ENCODE measurements at regions of chr20 and their contacts with region 1.

Region 1: GRCh38 chr20:58650776-58651558 is at the start of gene STX16:
- DNase-seq: peak; percentile 84
- H3K4me3 Mint-ChIP-seq: peak within 1 kb of the TSS; percentile 94
- H3K27ac Mint-ChIP-seq: peak within 1 kb of the TSS; percentile 97
- H3K4me1 Mint-ChIP-seq: peaks cover 25% of the 10 kb centered on the region
- H3K27me3 Mint-ChIP-seq: peaks cover 3% of the 10 kb centered on the region
- total RNA-seq, gene STX16: 99.9 and 102 TPM in 2 replicates

Region 2: DNA sequence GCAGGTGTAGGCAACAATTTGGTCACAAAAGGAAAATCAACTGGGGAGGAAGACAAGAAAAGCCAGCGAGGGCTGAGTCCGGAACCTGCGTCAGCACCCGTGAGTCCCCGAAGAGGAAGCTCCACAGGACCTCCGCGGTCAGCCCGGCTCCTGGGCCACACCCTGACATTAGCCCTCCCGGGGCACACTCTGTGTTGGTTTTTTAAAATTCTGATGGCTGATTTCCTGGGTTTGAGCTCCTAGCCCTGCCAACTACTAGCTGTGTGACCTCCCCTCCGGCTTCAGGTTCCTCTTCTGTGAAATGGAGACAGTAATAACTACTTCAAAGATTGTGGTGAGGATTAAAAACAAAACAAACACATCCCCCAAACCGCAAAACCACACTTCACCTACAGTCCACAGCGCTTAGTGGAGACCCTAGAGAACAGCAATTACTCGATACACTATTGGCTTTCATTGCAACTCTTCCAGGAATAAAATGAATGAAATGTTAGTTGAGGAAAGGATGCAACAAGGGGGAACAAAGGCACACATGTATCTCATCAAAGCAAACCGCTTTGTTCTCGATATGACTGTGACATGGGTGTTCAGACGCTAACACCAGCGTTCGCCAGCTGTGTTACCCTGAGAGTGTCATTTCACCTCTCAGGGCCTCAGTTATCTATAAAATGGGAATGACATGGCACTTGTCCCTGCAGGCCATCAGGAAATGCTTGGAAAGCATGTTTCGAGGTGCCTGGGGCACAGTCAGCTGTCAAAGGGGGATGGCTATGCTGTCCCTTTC is 1031.7 kb before region 1 on chr20:
- intact Hi-C with region 1: loop called (anchors 2 kb)
- DNase-seq: peak; percentile 71
- H3K4me3 Mint-ChIP-seq: peak overlapping the region; percentile 72
- H3K27ac Mint-ChIP-seq: peak overlapping the region; percentile 86
- H3K4me1 Mint-ChIP-seq: peaks cover 51% of the 10 kb centered on the region
- H3K27me3 Mint-ChIP-seq: peaks cover 17% of the 10 kb centered on the region

Region 3: DNA sequence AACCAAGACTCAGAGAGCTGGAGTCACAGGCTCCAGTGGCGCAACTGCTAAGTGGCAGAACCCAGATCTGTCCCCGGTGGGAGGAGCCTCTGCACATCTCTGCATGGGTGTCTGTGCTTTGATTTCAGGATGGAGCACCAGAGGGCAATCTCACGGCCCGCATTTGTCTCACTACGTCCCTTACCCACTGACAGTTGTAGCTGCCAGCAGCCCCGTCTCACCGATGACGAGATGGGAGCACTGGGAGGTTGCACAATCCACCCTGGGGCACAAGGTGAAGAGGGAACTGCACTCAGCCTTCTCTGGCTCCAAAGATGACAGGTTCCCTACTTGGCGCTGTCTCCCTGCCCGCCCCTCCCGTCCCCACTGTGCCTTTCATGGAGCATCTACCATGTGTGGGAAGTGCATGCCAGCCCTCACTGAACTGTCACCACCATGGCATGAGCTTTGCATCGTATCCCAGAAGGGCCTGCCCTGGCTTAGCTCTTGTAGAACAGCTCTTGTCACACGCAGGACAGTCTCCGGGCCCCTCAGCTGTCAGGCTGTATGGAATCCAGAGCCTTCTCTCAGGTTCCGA is 841.3 kb before region 1 on chr20:
- intact Hi-C with region 1: no loop called
- DNase-seq: no peak
- H3K4me3 Mint-ChIP-seq: no peak overlapping the region
- H3K27ac Mint-ChIP-seq: no peak overlapping the region
- H3K4me1 Mint-ChIP-seq: no peaks in the 10 kb centered on the region
- H3K27me3 Mint-ChIP-seq: peaks cover 2% of the 10 kb centered on the region

Region 4: DNA sequence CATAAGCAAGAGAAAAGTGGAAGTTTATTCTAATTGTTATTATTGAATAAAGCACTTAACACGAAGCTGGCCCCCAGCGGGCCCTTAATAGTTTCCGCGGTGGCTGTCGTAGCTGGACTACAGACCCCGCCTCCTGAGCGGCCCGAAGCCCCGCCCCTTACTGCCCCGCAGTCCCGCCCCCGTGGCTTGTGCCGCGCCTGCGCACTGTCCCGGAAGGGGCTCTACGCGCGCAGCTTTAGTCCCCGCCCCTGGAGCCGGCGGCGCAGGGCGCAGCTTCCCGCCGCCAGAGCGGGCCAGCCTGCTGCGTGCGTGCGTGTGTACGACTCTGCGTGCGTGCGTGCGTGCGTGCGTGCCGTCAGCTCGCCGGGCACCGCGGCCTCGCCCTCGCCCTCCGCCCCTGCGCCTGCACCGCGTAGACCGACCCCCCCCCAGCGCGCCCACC is 262.1 kb before region 1 on chr20 and contains the start of gene VAPB:
- intact Hi-C with region 1: loop called (anchors 1 kb)
- DNase-seq: peak; percentile 97
- H3K4me3 Mint-ChIP-seq: peak within 1 kb of the TSS; percentile 99
- H3K27ac Mint-ChIP-seq: peak within 1 kb of the TSS; percentile 96
- H3K4me1 Mint-ChIP-seq: peaks cover 39% of the 10 kb centered on the region
- H3K27me3 Mint-ChIP-seq: peaks cover 10% of the 10 kb centered on the region
- total RNA-seq, gene VAPB: 39.7 and 40.9 TPM in 2 replicates

Region 5: GRCh38 chr20:58623826-58624473 is 27.0 kb before region 1 on chr20:
- intact Hi-C with region 1: no loop called
- DNase-seq: no peak
- H3K4me3 Mint-ChIP-seq: no peak overlapping the region
- H3K27ac Mint-ChIP-seq: no peak overlapping the region
- H3K4me1 Mint-ChIP-seq: no peaks in the 10 kb centered on the region
- H3K27me3 Mint-ChIP-seq: peaks cover 8% of the 10 kb centered on the region

Region 6: DNA sequence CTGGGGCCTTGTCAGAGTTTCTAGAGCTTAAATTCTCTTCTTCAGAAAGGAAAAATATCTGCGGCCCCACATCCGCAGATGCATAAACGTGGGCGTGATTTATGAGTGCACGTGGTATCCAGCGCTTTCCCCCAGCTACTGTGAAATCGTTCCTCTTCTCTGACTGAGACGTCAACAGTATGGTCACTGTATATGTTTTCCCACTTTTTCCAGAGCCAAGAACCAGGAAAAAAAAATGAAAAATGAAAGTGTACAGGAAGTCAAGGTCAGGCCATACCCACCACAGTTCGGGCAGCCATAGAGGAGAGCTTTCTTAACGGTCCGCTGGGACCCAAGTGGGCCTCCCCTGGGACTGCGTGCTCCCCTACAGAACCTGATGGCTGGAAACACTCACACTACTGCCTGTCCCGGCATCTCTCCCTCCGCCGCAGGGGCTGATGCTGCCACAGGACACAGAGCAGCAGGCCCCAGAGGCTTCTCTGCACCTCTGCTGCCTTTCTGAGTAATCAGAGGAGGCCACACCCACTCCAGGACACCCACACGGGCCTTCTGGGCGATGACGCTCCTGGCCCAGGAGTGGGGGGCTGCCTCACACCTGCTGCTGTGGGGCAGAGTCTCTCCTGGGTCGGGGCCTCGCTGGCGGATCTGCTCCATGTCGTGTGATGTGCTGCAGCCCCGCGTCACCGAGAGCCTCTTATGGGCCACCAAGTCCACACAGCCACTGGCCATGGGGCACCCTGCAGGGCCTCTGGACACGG is 16.3 kb before region 1 on chr20:
- intact Hi-C with region 1: loop called (anchors 1 kb)
- DNase-seq: no peak
- H3K4me3 Mint-ChIP-seq: no peak overlapping the region
- H3K27ac Mint-ChIP-seq: peak overlapping the region; percentile 52
- H3K4me1 Mint-ChIP-seq: peaks cover 15% of the 10 kb centered on the region
- H3K27me3 Mint-ChIP-seq: peaks cover 8% of the 10 kb centered on the region

Region 7: GRCh38 chr20:58818585-58819285 is 167.8 kb after region 1 on chr20:
- intact Hi-C with region 1: loop called (anchors 10 kb)
- DNase-seq: peak; percentile 55
- H3K4me3 Mint-ChIP-seq: peak overlapping the region; percentile 20
- H3K27ac Mint-ChIP-seq: peak overlapping the region; percentile 53
- H3K4me1 Mint-ChIP-seq: peaks cover 16% of the 10 kb centered on the region
- H3K27me3 Mint-ChIP-seq: peaks cover 41% of the 10 kb centered on the region

Region 8: DNA sequence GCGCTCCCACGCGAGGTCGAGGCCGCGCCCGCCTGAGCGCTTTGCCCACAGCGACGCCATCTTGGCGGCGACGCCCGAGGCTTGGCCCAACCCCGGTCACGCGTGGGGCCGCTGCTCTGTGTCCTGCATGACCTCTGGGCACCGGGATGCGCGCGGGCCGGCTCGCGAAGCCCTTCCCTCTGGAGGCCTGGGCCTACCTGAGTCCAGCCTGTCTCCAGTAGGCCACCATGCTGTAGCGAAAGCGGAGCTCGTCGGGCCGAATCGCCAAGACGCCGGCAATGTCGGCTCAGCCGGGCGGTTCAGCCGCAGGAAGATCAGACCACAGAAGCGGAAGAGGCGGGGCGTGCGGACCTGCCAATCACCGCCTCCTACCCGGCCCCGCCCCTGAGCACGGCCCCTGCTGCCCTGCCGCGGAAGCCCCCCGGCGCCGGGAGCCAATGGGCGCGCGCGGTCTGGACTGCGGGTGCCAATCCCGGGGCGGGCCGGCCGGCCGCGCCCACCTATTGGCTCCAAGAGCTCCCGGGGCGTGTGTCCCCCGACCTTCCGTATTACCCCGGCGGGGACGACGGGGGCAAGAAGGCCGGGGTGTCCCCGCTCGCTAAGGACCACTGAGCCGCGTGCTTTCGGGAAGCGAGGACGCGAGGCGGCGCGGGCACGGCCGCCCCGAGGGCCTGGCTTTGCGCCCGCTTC is 381.2 kb after region 1 on chr20 and contains the start of gene ATP5F1E:
- intact Hi-C with region 1: loop called (anchors 5 kb)
- DNase-seq: peak; percentile 96
- H3K4me3 Mint-ChIP-seq: peak within 1 kb of the TSS; percentile 90
- H3K27ac Mint-ChIP-seq: peak within 1 kb of the TSS; percentile 94
- H3K4me1 Mint-ChIP-seq: peaks cover 60% of the 10 kb centered on the region
- H3K27me3 Mint-ChIP-seq: no peaks in the 10 kb centered on the region
- total RNA-seq, gene ATP5F1E: 81.3 and 84.6 TPM in 2 replicates

Region 9: DNA sequence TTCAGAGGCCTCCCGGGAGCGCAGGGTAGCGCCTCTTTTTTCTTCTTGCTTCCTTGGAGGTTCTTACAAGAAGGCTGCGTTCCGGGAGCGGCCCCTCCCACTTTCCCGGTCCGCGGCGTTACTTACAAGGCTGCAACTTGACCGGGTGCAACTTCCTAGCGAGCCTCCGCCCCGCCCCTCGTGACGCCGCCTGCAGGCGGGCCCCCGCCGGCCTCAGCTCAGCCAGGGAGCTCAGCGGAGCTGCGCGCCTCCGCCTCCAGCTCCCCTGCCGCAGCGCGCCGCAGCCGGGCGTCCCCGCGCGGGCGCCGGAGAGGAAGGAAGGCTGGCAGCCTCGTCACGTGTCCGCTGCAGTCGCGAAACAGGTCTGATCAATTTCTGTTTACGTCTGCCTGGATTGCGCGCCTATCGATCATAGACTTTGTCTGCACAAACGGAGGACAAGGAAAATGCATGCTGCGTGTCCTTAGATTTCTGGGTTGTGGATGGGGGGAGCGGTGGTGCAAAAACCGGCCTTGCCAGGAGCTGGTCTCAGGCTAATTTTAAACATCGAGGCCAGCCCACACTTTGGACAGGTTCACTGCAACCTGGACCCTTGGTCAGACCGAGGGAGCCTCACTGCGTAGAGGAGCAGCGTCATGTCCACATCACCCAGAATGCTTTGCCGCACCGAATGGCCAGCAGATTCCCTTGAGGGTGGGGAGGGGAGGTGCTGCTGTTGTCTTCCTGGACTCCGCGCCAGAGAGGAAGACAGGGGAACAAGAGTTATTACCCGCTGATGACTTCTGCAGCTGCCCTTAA is 1289.4 kb after region 1 on chr20 and contains the starts of genes FAM217B and PPP1R3D:
- intact Hi-C with region 1: loop called (anchors 5 kb)
- DNase-seq: peak; percentile 92
- H3K4me3 Mint-ChIP-seq: peak within 1 kb of the TSS; percentile 98
- H3K27ac Mint-ChIP-seq: peak within 1 kb of the TSS; percentile 99
- H3K4me1 Mint-ChIP-seq: peaks cover 48% of the 10 kb centered on the region
- H3K27me3 Mint-ChIP-seq: no peaks in the 10 kb centered on the region
- total RNA-seq, gene FAM217B: 33.9 and 35.6 TPM in 2 replicates
- total RNA-seq, gene PPP1R3D: 7.0 and 7.6 TPM in 2 replicates